GM12878 (cell line): ENCODE measurements at regions of chr3 and their contacts with region 1.

Region 1: GRCh38 chr3:136728918-136729317 is 23.3 kb downstream of the STAG1 start:
- DNase-seq: no peak
- ATAC-seq: no peak; the same call in 2 of the 3 replicates
- H3K4me3 ChIP-seq: no peak overlapping the region
- H3K27ac ChIP-seq: no peak overlapping the region
- H3K4me1 ChIP-seq: peaks cover 30% of the 10 kb centered on the region
- H3K27me3 ChIP-seq: no peaks in the 10 kb centered on the region
- CTCF ChIP-seq: no peak
- EP300 ChIP-seq: no peak
- POLR2A ChIP-seq: no peak
- RAD21 ChIP-seq: no peak

Region 2: GRCh38 chr3:136642745-136643144 is 86.2 kb before region 1 on chr3:
- CTCF ChIA-PET with region 1: no interaction called
- POLR2A ChIA-PET with region 1: no interaction called
- RAD21 ChIA-PET with region 1: no interaction called
- SMC1A ChIA-PET with region 1: no interaction called
- in situ Hi-C with region 1: no loop called
- intact Hi-C with region 1: no loop called
- DNase-seq: no peak
- ATAC-seq: no peak
- H3K4me3 ChIP-seq: no peak overlapping the region
- H3K27ac ChIP-seq: no peak overlapping the region
- H3K4me1 ChIP-seq: peaks cover 13% of the 10 kb centered on the region
- H3K27me3 ChIP-seq: no peaks in the 10 kb centered on the region
- CTCF ChIP-seq: no peak
- EP300 ChIP-seq: no peak
- POLR2A ChIP-seq: no peak
- RAD21 ChIP-seq: no peak

Region 3: DNA sequence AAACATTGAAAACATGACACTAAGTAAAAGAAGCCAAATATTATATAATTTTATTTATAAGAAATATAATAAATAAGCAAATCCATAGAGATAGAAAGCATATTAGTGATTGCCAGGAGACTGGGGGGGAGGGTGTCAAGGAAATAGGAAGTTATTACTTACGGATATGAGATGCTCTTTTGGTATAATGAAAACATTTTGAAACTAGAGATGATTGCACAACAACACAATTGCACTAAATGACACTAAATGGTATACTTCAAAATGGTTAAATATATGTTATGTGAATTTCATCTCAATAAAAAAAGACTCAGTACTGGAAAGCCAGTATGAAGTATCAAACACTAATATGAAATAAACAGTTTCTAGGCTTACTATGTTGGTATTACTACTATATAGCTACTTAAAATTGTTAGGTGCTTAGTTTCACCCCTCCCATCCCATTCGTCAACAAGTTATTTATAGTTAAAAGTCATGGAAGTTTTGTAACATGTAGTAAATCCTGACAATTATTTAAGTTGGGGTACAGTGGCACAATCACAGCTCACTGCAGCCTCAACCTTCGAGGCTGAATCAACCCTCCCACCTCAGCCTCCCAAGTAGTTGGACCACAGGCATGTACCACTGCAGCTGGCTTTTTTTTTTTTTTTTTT is 20.5 kb before region 1 on chr3:
- CTCF ChIA-PET with region 1: no interaction called
- POLR2A ChIA-PET with region 1: interaction called, 10 read pairs
- RAD21 ChIA-PET with region 1: no interaction called
- SMC1A ChIA-PET with region 1: interaction called, 3 read pairs
- in situ Hi-C with region 1: no loop called
- intact Hi-C with region 1: no loop called
- DNase-seq: no peak
- ATAC-seq: no peak
- H3K4me3 ChIP-seq: no peak overlapping the region
- H3K27ac ChIP-seq: no peak overlapping the region
- H3K4me1 ChIP-seq: no peaks in the 10 kb centered on the region
- H3K27me3 ChIP-seq: no peaks in the 10 kb centered on the region
- CTCF ChIP-seq: no peak
- EP300 ChIP-seq: no peak
- POLR2A ChIP-seq: no peak
- RAD21 ChIP-seq: no peak